ENCODE measurements at regions of chr9 and their contacts with region 1.

Region 1: DNA sequence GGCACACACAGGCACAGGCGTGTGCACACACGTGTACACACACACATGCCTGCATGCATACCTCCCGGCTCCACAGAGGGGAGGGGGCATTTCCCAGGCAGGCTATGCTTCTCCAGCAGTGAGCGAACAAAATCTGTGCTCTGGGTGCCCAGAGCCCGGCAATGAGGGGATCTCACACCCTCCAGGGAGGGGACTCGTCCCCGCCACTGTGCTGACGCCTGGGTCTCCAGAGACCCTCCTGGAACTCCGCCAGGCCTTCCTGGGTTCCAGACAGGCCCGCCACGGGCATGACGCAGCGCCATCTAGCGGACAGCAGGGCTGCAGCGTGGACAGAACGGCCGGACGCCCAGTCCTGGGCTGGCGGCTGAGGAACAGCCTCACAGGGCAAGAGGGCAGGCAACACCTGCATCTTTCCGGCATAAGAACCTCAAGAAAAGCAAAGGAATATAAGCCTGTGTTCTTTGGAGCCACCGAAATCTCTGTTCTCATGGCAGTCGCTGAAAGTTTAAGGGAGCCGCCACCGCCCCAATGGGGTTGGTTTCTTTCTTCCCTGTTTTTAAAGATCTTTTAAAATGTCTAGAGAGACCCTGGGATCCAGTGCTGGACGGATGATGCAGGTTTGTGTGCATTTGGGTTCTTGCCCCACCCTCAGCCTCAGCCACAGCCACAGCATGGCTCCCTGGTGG is 135.6 kb upstream of the PPP1R26 start:
- DNase-seq: peak in 1 of 2 experiments; percentile 50
- H3K4me3 ChIP-seq: no peak overlapping the region
- H3K27ac ChIP-seq: no peak overlapping the region
- H3K4me1 ChIP-seq: no peaks in the 10 kb centered on the region
- H3K27me3 ChIP-seq: peaks cover 100% of the 10 kb centered on the region
- CTCF ChIP-seq: peak; percentile 90

Region 2: DNA sequence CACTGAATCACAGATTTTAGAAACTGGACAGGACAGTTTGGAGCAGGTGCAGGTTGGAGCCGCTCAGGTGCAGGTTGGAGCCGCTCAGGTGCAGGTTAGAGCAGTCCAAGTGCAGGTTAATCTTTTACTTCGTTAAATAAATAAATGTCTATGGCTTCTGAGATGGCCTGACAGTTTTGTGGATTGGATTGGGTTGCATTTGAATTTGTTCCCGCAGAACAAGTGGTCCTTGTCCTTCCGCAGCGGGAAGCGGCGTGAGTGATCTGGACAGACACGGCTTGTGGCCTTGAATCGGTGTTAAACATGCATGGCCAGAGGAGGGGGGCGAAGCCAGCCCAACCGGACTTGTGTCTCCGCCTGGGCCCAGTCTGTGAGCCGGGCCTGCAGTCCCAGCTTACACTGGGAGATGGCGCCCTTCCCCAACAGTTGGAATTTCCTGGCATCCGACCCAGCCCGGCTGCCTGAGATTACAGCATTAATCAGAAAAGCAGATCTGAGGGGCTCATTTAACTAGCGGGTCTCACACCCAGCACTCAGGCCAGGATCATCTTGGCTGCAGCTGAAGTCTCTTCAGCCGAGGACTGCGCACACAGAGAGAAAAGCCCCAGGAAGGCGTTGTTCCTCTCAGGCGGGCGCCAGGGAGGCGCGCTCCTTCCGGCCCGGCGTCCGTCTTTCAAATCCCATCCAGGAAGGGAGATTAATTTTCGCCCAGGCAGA is 258.0 kb before region 1 on chr9:
- CTCF ChIA-PET with region 1: no interaction called
- POLR2A ChIA-PET with region 1: no interaction called
- intact Hi-C with region 1: loop called (anchors 1 kb)
- DNase-seq: peak; percentile 38 to 67
- H3K4me3 ChIP-seq: no peak overlapping the region
- H3K27ac ChIP-seq: no peak overlapping the region
- H3K4me1 ChIP-seq: no peaks in the 10 kb centered on the region
- H3K27me3 ChIP-seq: peaks cover 75% of the 10 kb centered on the region
- CTCF ChIP-seq: peak; percentile 81

Region 3: DNA sequence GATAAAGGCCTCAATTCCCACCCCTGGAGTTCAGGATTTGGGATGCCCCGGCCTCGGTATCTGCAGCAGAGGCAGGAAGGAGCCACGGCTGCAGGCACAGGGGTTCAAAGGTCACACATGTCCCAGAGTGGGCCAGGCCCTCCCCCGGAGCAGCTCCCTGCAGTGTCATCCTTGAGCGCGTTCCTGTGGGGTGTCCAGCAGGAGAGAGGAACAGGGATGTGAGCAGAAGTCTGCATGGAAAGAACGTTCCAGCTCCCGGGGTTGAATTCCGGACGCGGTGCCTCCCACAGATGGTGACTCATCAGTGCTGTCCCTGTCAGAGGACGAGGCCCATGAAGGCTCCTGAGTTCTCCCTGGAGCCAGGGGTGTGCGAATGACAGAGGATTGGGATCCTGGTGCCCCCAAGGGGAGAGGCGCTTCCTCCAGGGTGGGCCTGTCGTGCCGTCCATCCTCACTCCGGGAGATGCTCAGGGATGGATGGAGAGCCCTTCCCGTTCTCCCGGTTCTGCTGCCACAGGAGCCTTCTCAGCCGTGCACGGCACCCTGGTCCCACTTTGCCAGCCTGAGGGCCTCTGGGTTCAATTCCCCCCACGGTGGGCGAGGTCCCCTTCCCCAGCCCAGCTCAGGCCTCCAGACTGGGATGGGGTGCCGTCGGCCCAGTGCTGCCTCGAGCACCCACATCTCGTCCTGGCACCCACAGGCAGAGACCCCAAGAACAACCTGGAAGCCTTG is 180.3 kb after region 1 on chr9:
- CTCF ChIA-PET with region 1: no interaction called
- POLR2A ChIA-PET with region 1: no interaction called
- intact Hi-C with region 1: no loop called
- DNase-seq: no peak
- H3K4me3 ChIP-seq: no peak overlapping the region
- H3K27ac ChIP-seq: no peak overlapping the region
- H3K4me1 ChIP-seq: no peaks in the 10 kb centered on the region
- H3K27me3 ChIP-seq: peaks cover 54% of the 10 kb centered on the region
- CTCF ChIP-seq: no peak